ENCODE measurements at regions of chr18 and their contacts with region 1.

Region 1: GRCh38 chr18:62938487-62938886 is 223.1 kb downstream of the PHLPP1 start:
- DNase-seq: no peak
- ATAC-seq: no peak
- H3K4me3 ChIP-seq: no peak overlapping the region
- H3K27ac ChIP-seq: no peak overlapping the region
- H3K4me1 ChIP-seq: no peaks in the 10 kb centered on the region
- H3K27me3 ChIP-seq: no peaks in the 10 kb centered on the region
- CTCF ChIP-seq: no peak
- POLR2A ChIP-seq: no peak
- RAD21 ChIP-seq: no peak

Region 2: DNA sequence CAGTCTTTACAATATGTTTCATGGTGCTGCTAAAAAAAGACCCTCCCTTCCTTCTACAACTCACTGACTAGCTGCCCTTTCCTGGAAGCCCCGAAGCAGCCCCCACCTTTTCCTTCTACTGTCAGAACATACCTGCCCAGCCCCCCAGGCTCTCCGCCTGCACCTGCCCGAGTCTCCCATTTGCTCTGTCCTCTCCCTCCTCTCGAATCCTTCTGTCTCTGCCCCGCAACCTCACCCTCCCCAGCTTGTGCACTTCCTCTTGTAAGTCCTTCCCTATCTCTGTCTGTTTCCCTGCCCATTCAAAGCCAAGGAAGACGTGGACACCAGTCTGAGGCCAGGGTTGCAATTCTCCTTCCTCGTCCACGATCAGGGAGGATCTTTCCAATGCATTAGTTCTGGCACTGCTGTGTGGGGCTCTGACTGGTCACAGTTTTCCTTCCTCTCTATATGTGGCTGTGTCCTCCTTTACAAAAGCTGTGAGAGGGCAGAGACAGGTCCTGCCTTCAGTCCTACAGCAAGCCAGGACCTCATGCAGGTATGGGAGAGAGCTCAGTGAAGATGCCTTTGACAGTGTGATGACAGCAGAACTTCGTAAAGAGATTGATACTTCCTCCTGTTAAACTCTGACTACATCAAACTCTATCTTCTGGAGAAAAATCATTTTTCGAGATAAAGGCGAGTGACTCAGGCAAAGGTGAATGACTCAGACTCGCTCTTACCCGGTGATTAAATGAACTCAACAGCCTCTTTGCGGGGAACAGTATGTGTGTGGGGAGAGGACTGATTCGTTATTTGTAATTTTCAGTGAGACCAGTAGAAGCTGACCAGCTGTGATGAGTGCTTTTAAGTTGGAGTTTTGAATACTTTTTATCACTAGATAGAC is 599.1 kb before region 1 on chr18:
- CTCF ChIA-PET with region 1: no interaction called
- POLR2A ChIA-PET with region 1: no interaction called
- RAD21 ChIA-PET with region 1: no interaction called
- intact Hi-C with region 1: no loop called
- DNase-seq: peak; percentile 39
- ATAC-seq: peak; percentile 88
- H3K4me3 ChIP-seq: peak overlapping the region in 1 of 2 experiments; percentile 21; a peak in 1 of 4 replicates
- H3K27ac ChIP-seq: peak overlapping the region; percentile 46; the same call in 1 of the 2 replicates
- H3K4me1 ChIP-seq: peaks cover 9 to 15% of the 10 kb centered on the region in 2 experiments
- H3K27me3 ChIP-seq: no peaks in the 10 kb centered on the region
- CTCF ChIP-seq: no peak
- POLR2A ChIP-seq: no peak
- RAD21 ChIP-seq: no peak

Region 3: DNA sequence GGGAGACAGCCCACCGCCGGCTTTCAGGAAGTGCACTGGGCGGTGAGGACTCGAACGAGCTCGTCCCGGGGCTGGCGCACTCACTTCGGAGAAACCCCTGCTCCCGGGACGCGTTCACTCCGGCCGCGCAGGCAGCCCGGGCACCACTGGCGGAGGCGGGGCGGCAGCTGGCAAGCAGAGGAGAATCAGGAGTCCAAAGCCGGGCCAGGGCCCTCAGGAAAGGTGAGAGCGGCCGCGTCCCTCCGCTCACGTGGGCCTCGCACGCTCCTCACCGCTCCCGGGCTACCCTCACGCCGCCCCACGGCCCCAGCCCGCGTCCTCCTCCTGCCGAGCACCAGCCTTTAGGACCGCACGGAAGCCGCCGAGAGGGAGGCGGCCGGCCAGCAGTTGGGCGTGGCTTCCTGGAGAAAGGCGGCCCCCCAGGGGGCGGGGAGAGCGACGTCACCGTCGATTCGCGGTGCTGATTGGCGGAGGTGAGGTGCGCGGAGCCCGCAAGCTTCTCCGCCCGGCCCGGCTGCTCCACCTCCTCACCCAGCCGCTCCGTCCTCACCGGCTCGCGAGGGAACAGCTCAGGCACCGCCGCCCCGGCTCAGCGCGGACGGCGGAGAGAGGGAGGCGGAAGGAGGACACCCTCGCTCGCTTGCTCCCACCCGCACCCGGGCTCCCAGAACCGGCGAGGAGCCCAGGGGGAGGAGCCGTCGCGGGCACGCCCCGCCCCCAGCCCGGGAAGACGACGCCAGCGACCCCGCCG is 415.8 kb before region 1 on chr18 and contains the start of gene ZCCHC2:
- CTCF ChIA-PET with region 1: no interaction called
- POLR2A ChIA-PET with region 1: no interaction called
- RAD21 ChIA-PET with region 1: no interaction called
- intact Hi-C with region 1: no loop called
- DNase-seq: peak; percentile 94
- ATAC-seq: peak; percentile 83
- H3K4me3 ChIP-seq: peak within 1 kb of the TSS; percentile 76 to 83
- H3K27ac ChIP-seq: peak within 1 kb of the TSS; percentile 98
- H3K4me1 ChIP-seq: peaks cover 21 to 34% of the 10 kb centered on the region in 2 experiments
- H3K27me3 ChIP-seq: no peaks in the 10 kb centered on the region
- CTCF ChIP-seq: no peak
- POLR2A ChIP-seq: peak; percentile 58
- RAD21 ChIP-seq: no peak
- total RNA-seq, gene ZCCHC2: 17.7 TPM

Region 4: GRCh38 chr18:62999392-62999791 is 60.9 kb after region 1 on chr18:
- CTCF ChIA-PET with region 1: no interaction called
- POLR2A ChIA-PET with region 1: no interaction called
- RAD21 ChIA-PET with region 1: no interaction called
- intact Hi-C with region 1: loop called (anchors 10 kb)
- DNase-seq: no peak
- ATAC-seq: no peak
- H3K4me3 ChIP-seq: no peak overlapping the region
- H3K27ac ChIP-seq: no peak overlapping the region
- H3K4me1 ChIP-seq: no peaks in the 10 kb centered on the region
- H3K27me3 ChIP-seq: no peaks in the 10 kb centered on the region
- CTCF ChIP-seq: no peak
- POLR2A ChIP-seq: no peak
- RAD21 ChIP-seq: no peak